Mammary epithelial cell (primary cell): ENCODE measurements at regions of chr2 and their contacts with region 1.

Region 1: GRCh38 chr2:48420512-48421197 is 109.3 kb upstream of the STON1 start:
- DNase-seq: peak; percentile 97
- H3K4me3 ChIP-seq: no peak overlapping the region
- H3K27ac ChIP-seq: peak overlapping the region; percentile 84
- H3K4me1 ChIP-seq: peaks cover 26% of the 10 kb centered on the region
- H3K27me3 ChIP-seq: no peaks in the 10 kb centered on the region
- CTCF ChIP-seq: peak; percentile 95 to 98

Region 2: DNA sequence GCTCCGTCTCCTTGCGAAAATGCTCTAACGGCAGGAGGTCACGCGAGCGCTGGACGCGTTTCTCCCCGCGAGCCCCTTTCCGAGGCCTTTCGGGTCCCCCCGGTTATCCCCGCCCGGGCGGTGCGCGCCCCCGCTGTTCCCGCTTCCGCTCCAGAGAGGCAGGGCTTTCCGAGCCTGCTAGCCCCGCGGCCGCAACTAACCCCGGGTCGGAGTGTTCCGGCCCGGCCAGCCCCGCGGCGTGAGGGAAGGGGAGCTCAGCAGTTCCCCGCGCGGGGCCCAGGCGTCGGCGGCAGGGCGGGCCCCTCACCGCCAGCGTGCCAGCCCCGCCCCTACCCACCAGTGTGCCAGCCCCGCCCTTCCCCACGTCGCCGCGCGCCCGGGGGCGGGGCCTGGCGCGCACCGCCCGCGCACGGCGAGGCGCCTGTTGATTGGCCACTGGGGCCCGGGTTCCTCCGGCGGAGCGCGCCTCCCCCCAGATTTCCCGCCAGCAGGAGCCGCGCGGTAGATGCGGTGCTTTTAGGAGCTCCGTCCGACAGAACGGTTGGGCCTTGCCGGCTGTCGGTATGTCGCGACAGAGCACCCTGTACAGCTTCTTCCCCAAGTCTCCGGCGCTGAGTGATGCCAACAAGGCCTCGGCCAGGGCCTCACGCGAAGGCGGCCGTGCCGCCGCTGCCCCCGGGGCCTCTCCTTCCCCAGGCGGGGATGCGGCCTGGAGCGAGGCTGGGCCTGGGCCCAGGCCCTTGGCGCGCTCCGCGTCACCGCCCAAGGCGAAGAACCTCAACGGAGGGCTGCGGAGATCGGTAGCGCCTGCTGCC is 637.8 kb before region 1 on chr2 and contains the start of gene MSH6:
- CTCF ChIA-PET with region 1: no interaction called
- dilution Hi-C with region 1: no loop called
- in situ Hi-C with region 1: no loop called
- intact Hi-C with region 1: loop called (anchors 10 kb)
- DNase-seq: peak; percentile 86
- H3K4me3 ChIP-seq: peak within 1 kb of the TSS; percentile 68 to 94 (median 94)
- H3K27ac ChIP-seq: peak within 1 kb of the TSS; percentile 71
- H3K4me1 ChIP-seq: peaks cover 6% of the 10 kb centered on the region
- H3K27me3 ChIP-seq: no peaks in the 10 kb centered on the region
- CTCF ChIP-seq: no peak
- total RNA-seq, gene MSH6: 25.2 to 63.8 TPM

Region 3: GRCh38 chr2:47906157-47907038 is 514.3 kb before region 1 on chr2 and contains the start of gene FBXO11:
- CTCF ChIA-PET with region 1: no interaction called
- dilution Hi-C with region 1: no loop called
- in situ Hi-C with region 1: no loop called
- intact Hi-C with region 1: loop called (anchors 1 kb)
- DNase-seq: peak; percentile 99
- H3K4me3 ChIP-seq: peak within 1 kb of the TSS; percentile 82 to 96 (median 89)
- H3K27ac ChIP-seq: peak within 1 kb of the TSS; percentile 91
- H3K4me1 ChIP-seq: peaks cover 8% of the 10 kb centered on the region
- H3K27me3 ChIP-seq: no peaks in the 10 kb centered on the region
- CTCF ChIP-seq: peak; percentile 51 to 64
- total RNA-seq, gene FBXO11: 35.0 to 65.5 TPM

Region 4: DNA sequence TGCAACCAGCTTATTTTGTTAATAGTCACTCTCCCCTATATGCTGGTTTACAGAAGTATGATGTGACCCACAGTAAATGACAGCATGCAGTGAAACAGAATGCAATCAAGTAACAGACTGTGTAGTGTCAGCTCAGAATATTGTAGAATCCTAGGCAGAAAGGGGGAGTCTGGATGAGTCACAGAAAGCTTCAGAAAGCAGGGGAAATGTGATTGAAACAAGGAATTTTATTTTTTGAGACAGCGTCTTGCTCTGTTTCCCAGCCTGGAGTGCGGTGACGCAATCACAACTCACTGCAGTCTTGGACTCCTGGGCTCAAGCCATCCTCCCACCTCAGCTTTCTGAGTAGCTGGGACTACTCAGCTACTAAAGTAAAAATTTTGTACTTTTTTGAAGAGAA is 294.5 kb before region 1 on chr2:
- CTCF ChIA-PET with region 1: no interaction called
- dilution Hi-C with region 1: loop called (anchors 5 kb)
- in situ Hi-C with region 1: no loop called
- intact Hi-C with region 1: no loop called
- DNase-seq: no peak
- H3K4me3 ChIP-seq: no peak overlapping the region
- H3K27ac ChIP-seq: no peak overlapping the region
- H3K4me1 ChIP-seq: no peaks in the 10 kb centered on the region
- H3K27me3 ChIP-seq: no peaks in the 10 kb centered on the region
- CTCF ChIP-seq: no peak

Region 5: DNA sequence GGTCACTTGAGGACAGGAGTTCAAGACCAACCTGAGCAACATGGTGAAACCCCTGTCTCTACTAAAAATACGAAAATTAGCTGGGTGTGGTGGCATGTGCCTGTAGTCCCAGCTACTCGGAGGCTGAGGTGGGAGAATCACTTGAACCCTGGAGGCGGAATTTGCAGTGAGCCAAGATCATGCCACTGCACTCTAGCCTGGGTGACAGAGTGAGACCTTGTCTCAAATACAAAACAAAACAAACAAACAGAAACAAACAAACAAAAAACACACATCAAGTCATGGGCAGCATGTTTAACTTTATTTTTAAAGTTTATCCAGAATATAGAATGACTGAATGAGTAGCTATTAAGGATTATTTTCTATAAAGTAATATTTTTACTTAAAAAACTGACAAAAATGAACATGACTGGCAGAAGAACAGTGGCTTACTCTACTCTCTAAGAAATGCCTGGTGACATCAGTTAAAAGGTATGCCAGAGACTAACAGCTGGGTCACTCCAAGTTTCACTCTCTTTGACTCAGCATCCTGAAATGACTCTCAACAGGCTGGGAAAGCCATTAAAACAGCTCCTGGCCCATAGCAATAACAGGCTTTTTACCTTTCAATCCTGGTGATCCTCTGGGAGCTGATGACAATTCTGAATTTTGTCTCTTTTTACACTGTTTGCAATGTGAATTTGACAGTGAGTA is 172.3 kb before region 1 on chr2:
- CTCF ChIA-PET with region 1: no interaction called
- dilution Hi-C with region 1: no loop called
- in situ Hi-C with region 1: no loop called
- intact Hi-C with region 1: loop called (anchors 2 kb)
- DNase-seq: peak; percentile 93
- H3K4me3 ChIP-seq: no peak overlapping the region
- H3K27ac ChIP-seq: peak overlapping the region; percentile 80
- H3K4me1 ChIP-seq: peaks cover 15% of the 10 kb centered on the region
- H3K27me3 ChIP-seq: no peaks in the 10 kb centered on the region
- CTCF ChIP-seq: no peak

Region 6: DNA sequence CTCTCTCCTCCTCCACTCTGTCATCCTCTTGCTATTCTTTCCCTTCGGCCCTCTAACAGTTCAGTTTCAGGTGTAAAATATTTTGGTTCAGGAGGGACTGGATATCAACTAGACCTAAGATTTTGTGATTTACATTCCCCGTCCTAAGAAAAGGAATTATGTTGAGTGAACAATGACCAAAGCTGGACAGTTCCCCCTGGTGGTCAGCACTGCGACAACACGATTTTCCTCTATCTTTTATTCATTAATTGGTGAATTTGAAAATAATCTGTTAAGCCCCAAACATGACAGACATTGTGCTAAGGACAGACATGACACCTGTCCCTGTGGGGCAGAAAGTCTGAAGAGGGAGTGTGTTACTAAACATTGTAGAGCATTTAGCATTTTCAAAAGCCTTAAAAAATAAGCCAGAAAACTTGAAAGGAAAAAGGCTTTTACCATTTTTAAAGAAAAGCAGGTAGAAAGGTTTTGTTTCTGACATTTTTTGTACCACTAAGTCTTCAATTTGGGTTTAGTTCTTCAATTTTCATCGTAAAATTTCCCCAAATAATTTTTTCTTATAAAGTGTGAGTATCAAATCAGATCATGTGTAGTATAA is 168.6 kb after region 1 on chr2:
- CTCF ChIA-PET with region 1: no interaction called
- dilution Hi-C with region 1: no loop called
- in situ Hi-C with region 1: no loop called
- intact Hi-C with region 1: loop called (anchors 5 kb)
- DNase-seq: peak; percentile 19
- H3K4me3 ChIP-seq: no peak overlapping the region
- H3K27ac ChIP-seq: no peak overlapping the region
- H3K4me1 ChIP-seq: no peaks in the 10 kb centered on the region
- H3K27me3 ChIP-seq: no peaks in the 10 kb centered on the region
- CTCF ChIP-seq: peak; percentile 72 to 88